Vagina (tissue), 2 donors: ENCODE measurements at regions of chr6 and their contacts with region 1.

Region 1: DNA sequence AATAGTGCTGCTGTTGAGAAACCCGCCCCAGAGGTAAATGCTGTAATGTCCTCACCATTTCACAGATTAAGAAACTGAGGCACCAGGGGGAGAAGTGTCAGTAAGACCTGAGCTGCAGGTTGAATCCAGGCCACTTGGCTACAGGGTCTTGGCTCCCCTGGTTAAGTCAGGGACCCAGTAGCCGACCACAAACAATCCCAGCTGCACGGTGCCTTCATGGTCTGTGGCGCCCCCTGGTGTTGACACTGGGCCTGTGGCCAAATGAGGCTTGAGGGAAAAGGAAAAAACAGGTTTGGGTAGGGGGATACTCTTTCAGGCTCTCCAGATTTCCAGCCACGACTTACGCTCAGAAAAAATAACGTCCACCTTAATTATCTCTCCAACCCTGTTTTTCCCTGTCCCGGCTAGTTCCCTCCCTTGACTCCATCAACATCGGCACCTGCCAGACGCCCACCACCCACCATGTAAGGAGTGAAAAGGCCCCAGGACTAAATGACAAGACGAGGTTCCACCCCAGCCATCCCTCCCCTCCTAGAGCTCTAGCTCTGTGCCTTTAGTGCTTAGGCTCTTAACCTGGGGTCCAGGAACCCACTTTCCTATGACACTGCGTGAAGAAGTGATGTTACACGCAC is 47.7 kb upstream of the POLR1H start:
- DNase-seq: no peak
- H3K4me3 ChIP-seq: no peak overlapping the region
- H3K27ac ChIP-seq: no peak overlapping the region
- H3K4me1 ChIP-seq: no peaks in the 10 kb centered on the region
- H3K27me3 ChIP-seq: no peaks in the 10 kb centered on the region
- CTCF ChIP-seq: peak in 2 of 3 experiments; percentile 25 to 82
- POLR2A ChIP-seq: no peak

Region 2: GRCh38 chr6:29850011-29850553 is 163.3 kb before region 1 on chr6:
- intact Hi-C with region 1: loop called (anchors 5 kb)
- DNase-seq: peak in 1 of 2 donors; percentile 79
- H3K4me3 ChIP-seq: peak overlapping the region in 1 of 2 donors; percentile 33
- H3K27ac ChIP-seq: no peak overlapping the region
- H3K4me1 ChIP-seq: no peaks in the 10 kb centered on the region
- H3K27me3 ChIP-seq: no peaks in the 10 kb centered on the region
- CTCF ChIP-seq: no peak
- POLR2A ChIP-seq: no peak

Region 3: DNA sequence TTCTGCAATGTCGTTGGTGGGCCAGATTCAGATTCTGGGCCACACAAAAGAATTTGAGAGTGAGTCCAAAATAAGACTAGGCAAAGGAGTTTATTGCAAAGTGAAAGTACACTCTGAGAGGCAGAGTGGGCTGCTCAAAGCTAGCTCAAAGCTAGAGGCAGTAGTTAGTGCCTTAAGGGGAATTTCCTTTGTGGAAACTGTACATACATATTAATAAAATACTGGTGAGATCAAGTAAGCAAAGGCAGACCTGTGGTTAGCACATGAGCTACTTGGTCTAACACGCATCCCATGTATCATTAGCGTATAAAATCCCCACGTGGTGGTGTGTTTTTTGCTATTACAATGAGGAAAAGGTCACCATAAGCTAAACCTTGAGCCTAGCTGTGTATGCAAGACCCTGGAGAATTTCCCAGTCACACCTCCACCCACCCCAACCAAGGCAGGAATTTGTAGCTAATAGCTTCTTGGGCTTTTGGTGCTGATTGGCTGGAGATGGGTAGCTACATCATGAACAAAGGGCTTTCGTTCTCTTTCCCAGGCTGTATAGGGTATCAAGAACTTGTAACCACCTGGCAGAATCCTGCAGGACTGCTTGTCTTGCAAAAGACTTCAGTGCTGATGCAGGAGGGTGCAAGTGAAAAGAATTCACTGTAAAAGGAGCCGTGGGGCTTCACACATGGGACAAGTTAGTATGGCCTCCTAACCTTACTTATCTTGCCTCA is 214.5 kb after region 1 on chr6:
- intact Hi-C with region 1: no loop called
- DNase-seq: no peak
- H3K4me3 ChIP-seq: no peak overlapping the region
- H3K27ac ChIP-seq: no peak overlapping the region
- H3K4me1 ChIP-seq: no peaks in the 10 kb centered on the region
- H3K27me3 ChIP-seq: no peaks in the 10 kb centered on the region
- CTCF ChIP-seq: no peak
- POLR2A ChIP-seq: no peak